ENCODE measurements at regions of chr20 and their contacts with region 1.

Region 1: GRCh38 chr20:56439771-56440291 is 27.8 kb downstream of the CASS4 start:
- DNase-seq: peak; percentile 64
- ATAC-seq: peak; percentile 61
- H3K4me3 Mint-ChIP-seq: peak overlapping the region; percentile 56
- H3K27ac Mint-ChIP-seq: peak overlapping the region; percentile 96
- H3K4me1 Mint-ChIP-seq: peaks cover 49% of the 10 kb centered on the region
- H3K27me3 Mint-ChIP-seq: no peaks in the 10 kb centered on the region
- CTCF ChIP-seq: no peak

Region 2: DNA sequence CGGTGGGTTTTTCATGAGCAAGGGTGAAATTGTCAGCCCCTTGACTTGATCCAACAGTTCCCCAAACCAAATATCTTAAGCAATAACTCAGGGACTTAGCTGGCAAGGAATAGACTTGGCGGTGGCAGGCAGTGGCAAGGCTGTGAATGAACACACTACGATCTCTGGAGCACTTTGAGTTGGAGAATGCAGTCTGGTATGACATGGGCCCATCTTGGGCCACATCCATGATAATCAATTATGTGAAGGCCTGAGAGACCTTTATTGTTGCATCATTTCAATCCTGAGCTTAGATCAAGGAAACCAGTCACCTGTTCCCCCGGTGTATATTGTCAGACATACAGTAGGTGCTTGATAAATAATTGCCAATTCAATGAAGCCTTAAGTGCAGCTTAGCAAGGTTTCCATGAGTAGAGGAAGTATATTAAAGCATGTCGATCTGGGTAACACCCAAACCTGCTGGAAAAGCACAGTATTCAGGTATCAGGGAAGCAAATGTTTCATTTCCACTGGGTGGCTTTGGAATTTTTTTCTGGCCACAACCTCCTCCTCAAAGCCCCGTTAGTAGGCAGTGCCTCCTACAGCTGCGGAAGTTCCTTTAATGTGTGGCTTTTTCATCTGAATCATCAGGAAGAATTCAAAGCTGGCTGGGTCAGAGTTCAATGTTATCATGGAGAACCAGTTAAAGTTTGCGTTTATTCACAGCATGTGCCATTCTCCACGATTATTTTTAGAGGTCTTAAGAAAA is 17.6 kb before region 1 on chr20:
- CTCF ChIA-PET with region 1: interaction called, 5 read pairs
- POLR2A ChIA-PET with region 1: interaction called, 12 read pairs
- intact Hi-C with region 1: no loop called
- DNase-seq: no peak
- ATAC-seq: no peak
- H3K4me3 Mint-ChIP-seq: peak overlapping the region; percentile 1
- H3K27ac Mint-ChIP-seq: peak overlapping the region; percentile 76
- H3K4me1 Mint-ChIP-seq: peaks cover 74% of the 10 kb centered on the region
- H3K27me3 Mint-ChIP-seq: no peaks in the 10 kb centered on the region
- CTCF ChIP-seq: no peak

Region 3: GRCh38 chr20:56429502-56429901 is 10.3 kb before region 1 on chr20:
- CTCF ChIA-PET with region 1: interaction called, 5 read pairs
- POLR2A ChIA-PET with region 1: interaction called, 10 read pairs
- intact Hi-C with region 1: no loop called
- DNase-seq: peak; percentile 78
- ATAC-seq: peak; percentile 54
- H3K4me3 Mint-ChIP-seq: peak overlapping the region; percentile 69
- H3K27ac Mint-ChIP-seq: peak overlapping the region; percentile 95
- H3K4me1 Mint-ChIP-seq: peaks cover 76% of the 10 kb centered on the region
- H3K27me3 Mint-ChIP-seq: no peaks in the 10 kb centered on the region
- CTCF ChIP-seq: no peak

Region 4: GRCh38 chr20:56453352-56453751 is 13.5 kb after region 1 on chr20:
- CTCF ChIA-PET with region 1: interaction called, 4 read pairs
- POLR2A ChIA-PET with region 1: interaction called, 19 read pairs
- intact Hi-C with region 1: no loop called
- DNase-seq: no peak
- ATAC-seq: no peak
- H3K4me3 Mint-ChIP-seq: no peak overlapping the region
- H3K27ac Mint-ChIP-seq: peak overlapping the region; percentile 85
- H3K4me1 Mint-ChIP-seq: peaks cover 21% of the 10 kb centered on the region
- H3K27me3 Mint-ChIP-seq: no peaks in the 10 kb centered on the region
- CTCF ChIP-seq: no peak

Region 5: GRCh38 chr20:56542489-56543030 is 102.7 kb after region 1 on chr20:
- CTCF ChIA-PET with region 1: no interaction called
- POLR2A ChIA-PET with region 1: no interaction called
- intact Hi-C with region 1: no loop called
- DNase-seq: no peak
- ATAC-seq: no peak
- H3K4me3 Mint-ChIP-seq: no peak overlapping the region
- H3K27ac Mint-ChIP-seq: no peak overlapping the region
- H3K4me1 Mint-ChIP-seq: no peaks in the 10 kb centered on the region
- H3K27me3 Mint-ChIP-seq: no peaks in the 10 kb centered on the region
- CTCF ChIP-seq: no peak